Sciatic nerve (tissue), 2 donors: ENCODE measurements at regions of chr2 and their contacts with region 1.

Region 1: GRCh38 chr2:43898134-43898837 is 59.5 kb downstream of the ABCG8 start:
- DNase-seq: no peak
- ATAC-seq: no peak

Region 2: GRCh38 chr2:43977677-43978375 is 79.5 kb after region 1 on chr2:
- intact Hi-C with region 1: no loop called
- DNase-seq: no peak
- ATAC-seq: no peak

Region 3: GRCh38 chr2:45242161-45242741 is 1344.0 kb after region 1 on chr2:
- intact Hi-C with region 1: no loop called
- DNase-seq: no peak
- ATAC-seq: peak; percentile 78

Region 4: DNA sequence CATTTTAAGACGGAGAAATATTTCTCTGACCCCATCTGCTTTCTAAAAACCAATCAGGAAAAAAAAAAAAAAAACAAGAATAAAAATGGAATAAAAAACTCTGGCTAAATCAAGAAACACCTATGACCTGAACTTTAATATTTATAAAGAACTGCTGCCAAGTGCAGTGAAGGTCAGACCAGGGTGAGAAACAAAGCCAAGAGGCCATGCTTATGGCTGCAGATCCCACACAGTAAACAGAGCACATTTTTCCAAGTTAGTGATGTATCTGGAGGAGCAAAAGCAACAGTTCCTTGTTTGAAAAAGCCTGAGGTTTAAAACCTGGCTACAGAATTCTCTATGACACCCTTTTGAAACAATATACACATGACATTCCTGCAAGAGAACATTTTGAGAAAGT is 1470.5 kb after region 1 on chr2:
- intact Hi-C with region 1: loop called (anchors 5 kb)
- DNase-seq: no peak
- ATAC-seq: no peak

Region 5: DNA sequence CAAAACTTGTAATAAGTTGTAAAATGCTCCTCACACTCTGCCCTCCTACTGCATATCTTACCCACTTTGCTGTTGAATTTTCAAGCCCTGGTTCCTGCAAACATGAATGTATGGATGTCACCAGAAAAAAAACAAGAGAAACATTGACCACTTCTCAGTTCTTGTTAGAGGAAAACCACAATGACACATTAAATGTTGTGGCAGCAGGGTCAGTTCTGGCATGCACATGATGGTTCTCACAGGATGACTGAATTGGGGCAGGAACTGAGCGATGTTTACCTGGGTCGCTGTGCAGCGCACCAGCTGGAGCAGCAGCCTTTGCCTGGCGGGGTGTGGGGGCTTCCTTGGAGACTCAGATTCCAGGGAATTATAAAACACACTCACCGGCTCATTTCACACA is 1739.2 kb after region 1 on chr2:
- intact Hi-C with region 1: no loop called
- DNase-seq: no peak
- ATAC-seq: no peak